Breast epithelium (tissue), 4 donors: ENCODE measurements at regions of chr10 and their contacts with region 1.

Region 1: DNA sequence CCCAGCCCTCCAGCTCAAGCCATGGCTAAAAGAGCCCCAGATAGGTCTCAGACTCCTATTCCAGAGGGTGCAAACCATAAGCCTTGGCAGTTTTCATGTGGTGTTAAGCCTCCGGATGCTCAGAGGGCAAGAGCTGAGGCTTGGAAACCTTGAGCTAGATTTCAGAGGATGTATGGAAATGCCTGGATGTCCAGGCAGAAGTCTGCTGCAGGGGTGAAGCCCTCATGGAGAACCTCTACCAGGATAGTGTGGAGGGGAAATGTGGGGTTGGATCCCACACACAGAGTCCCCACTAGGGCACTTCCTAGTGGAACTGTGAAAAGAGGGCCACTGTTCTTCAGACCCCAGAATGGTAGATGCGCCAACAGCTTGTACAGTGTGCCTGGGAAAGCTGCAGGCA is 13.2 kb upstream of the HPSE2 start:
- DNase-seq: no peak
- H3K4me3 ChIP-seq: no peak overlapping the region
- H3K27ac ChIP-seq: no peak overlapping the region
- H3K4me1 ChIP-seq: no peaks in the 10 kb centered on the region
- H3K27me3 ChIP-seq: no peaks in the 10 kb centered on the region
- CTCF ChIP-seq: no peak
- POLR2A ChIP-seq: no peak

Region 2: GRCh38 chr10:97714048-97714371 is 1534.8 kb before region 1 on chr10:
- intact Hi-C with region 1: loop called (anchors 10 kb)
- DNase-seq: peak; percentile 65 to 66
- H3K4me3 ChIP-seq: peak overlapping the region; percentile 53 to 89 (median 75)
- H3K27ac ChIP-seq: peak overlapping the region; percentile 92 to 93
- H3K4me1 ChIP-seq: peaks cover 14 to 15% of the 10 kb centered on the region in 2 donors
- H3K27me3 ChIP-seq: no peaks in the 10 kb centered on the region
- CTCF ChIP-seq: no peak
- POLR2A ChIP-seq: no peak

Region 3: DNA sequence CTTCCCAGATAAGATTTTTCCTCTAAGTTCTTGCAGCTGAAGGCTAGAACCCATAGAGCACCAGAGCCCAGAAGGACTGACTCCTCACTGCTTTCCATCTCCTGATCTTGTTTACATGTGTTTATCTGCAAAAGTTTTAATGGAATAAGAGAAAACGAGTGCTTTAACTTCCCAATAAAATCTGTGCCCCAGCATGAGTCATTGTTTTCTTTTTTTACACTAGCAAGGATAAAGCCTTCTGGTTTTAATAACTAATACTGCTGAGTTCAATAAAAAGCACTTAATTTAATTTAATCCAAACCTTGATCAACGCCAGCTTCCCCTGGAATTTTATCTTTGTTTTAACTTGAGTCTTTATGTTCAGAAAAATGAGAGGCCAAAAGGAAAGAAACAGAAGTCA is 240.8 kb before region 1 on chr10:
- intact Hi-C with region 1: no loop called
- DNase-seq: no peak
- H3K4me3 ChIP-seq: no peak overlapping the region
- H3K27ac ChIP-seq: peak overlapping the region in 1 of 2 donors; percentile 35
- H3K4me1 ChIP-seq: no peaks in the 10 kb centered on the region
- H3K27me3 ChIP-seq: no peaks in the 10 kb centered on the region
- CTCF ChIP-seq: no peak
- POLR2A ChIP-seq: no peak

Region 4: GRCh38 chr10:99328579-99329523 is 80.0 kb after region 1 on chr10 and contains the start of gene CNNM1:
- intact Hi-C with region 1: no loop called
- DNase-seq: no peak
- H3K4me3 ChIP-seq: peak within 1 kb of the TSS; percentile 48 to 84 (median 63)
- H3K27ac ChIP-seq: no peak within 1 kb of the TSS
- H3K4me1 ChIP-seq: peaks cover 0 to 4% of the 10 kb centered on the region in 2 donors
- H3K27me3 ChIP-seq: peaks cover 6 to 20% of the 10 kb centered on the region in 2 donors
- CTCF ChIP-seq: no peak
- POLR2A ChIP-seq: no peak
- total RNA-seq, gene CNNM1: 0.64 to 0.98 (median 0.88) TPM